Breast epithelium (tissue), 4 donors: ENCODE measurements at regions of chr17 and their contacts with region 1.

Region 1: GRCh38 chr17:67841992-67842391 is 16.7 kb downstream of the BPTF start:
- DNase-seq: no peak
- H3K4me3 ChIP-seq: no peak overlapping the region
- H3K27ac ChIP-seq: no peak overlapping the region
- H3K4me1 ChIP-seq: no peaks in the 10 kb centered on the region
- H3K27me3 ChIP-seq: no peaks in the 10 kb centered on the region
- CTCF ChIP-seq: no peak
- POLR2A ChIP-seq: no peak

Region 2: DNA sequence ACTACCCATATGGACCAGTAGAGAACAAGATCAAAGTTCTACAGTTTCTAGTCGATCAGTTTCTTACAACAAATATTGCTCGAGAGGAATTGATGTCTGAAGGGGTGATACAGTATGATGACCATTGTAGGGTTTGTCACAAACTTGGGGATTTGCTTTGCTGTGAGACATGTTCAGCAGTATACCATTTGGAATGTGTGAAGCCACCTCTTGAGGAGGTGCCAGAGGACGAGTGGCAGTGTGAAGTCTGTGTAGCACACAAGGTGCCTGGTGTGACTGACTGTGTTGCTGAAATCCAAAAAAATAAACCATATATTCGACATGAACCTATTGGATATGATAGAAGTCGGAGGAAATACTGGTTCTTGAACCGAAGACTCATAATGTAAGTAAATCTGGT is 12.4 kb after region 1 on chr17:
- intact Hi-C with region 1: loop called (anchors 1 kb)
- DNase-seq: no peak
- H3K4me3 ChIP-seq: no peak overlapping the region
- H3K27ac ChIP-seq: no peak overlapping the region
- H3K4me1 ChIP-seq: no peaks in the 10 kb centered on the region
- H3K27me3 ChIP-seq: no peaks in the 10 kb centered on the region
- CTCF ChIP-seq: no peak
- POLR2A ChIP-seq: no peak